ENCODE measurements at regions of chr1 and their contacts with region 1.

Region 1: DNA sequence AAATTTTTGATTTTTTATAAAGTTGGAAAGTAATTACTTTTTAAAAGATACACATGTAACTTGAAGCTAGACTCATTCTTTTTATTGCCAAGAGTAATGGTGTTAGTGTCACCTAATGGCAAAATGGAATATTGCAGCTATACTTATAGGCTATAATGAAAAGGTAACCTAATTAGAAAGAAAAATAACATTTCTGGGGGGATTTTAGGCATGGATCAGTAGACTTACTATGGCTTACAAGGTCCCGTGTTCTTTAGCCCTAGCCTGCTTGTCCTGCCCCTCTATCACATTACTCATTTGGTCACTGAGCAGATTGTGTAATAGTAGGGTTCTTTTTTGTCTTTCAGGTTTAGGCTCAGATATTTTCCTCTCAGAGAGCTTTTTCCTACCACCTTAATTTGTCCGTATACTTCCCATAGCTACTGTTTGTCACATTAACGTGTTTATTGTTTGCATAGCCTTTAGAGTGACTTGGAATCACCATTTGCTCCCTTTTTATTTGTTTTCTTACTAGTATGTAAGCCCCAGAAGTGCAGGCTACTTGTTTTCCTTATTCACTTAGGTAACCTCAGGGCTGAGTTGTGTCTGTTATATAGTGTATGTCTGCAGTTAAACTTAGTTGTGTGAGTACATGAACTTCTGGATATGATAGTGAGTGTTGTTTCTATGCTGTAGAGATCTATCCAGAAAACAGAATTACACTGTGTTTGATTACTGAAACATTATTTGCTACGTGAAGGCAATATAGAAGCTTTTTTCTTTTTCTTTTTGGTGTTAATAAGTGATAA is 58.7 kb downstream of the RABGAP1L start:
- DNase-seq: no peak
- ATAC-seq: peak; percentile 48 to 86 (median 62)
- H3K4me3 ChIP-seq: no peak overlapping the region
- H3K27ac ChIP-seq: no peak overlapping the region
- H3K4me1 ChIP-seq: peaks cover 11% of the 10 kb centered on the region
- H3K27me3 ChIP-seq: no peaks in the 10 kb centered on the region
- CTCF ChIP-seq: peak; percentile 80

Region 2: GRCh38 chr1:174159252-174160108 is 58.5 kb before region 1 on chr1 and contains the start of gene RABGAP1L:
- intact Hi-C with region 1: loop called in 1 of 2 experiments (anchors 5 kb)
- DNase-seq: peak; percentile 95 to 97
- ATAC-seq: peak; percentile 96 to 98 (median 97)
- H3K4me3 ChIP-seq: peak within 1 kb of the TSS; percentile 80
- H3K27ac ChIP-seq: peak within 1 kb of the TSS; percentile 85
- H3K4me1 ChIP-seq: peaks cover 12% of the 10 kb centered on the region
- H3K27me3 ChIP-seq: no peaks in the 10 kb centered on the region
- CTCF ChIP-seq: no peak
- total RNA-seq, gene RABGAP1L: 8.7 to 14.4 (median 11.7) TPM

Region 3: GRCh38 chr1:174239541-174239940 is 21.6 kb after region 1 on chr1:
- intact Hi-C with region 1: no loop called
- DNase-seq: no peak
- ATAC-seq: no peak
- H3K4me3 ChIP-seq: no peak overlapping the region
- H3K27ac ChIP-seq: no peak overlapping the region
- H3K4me1 ChIP-seq: no peaks in the 10 kb centered on the region
- H3K27me3 ChIP-seq: no peaks in the 10 kb centered on the region
- CTCF ChIP-seq: no peak

Measured in psoas muscle (tissue), 8 donors.